ENCODE measurements at regions of chr5 and their contacts with region 1.

Region 1: DNA sequence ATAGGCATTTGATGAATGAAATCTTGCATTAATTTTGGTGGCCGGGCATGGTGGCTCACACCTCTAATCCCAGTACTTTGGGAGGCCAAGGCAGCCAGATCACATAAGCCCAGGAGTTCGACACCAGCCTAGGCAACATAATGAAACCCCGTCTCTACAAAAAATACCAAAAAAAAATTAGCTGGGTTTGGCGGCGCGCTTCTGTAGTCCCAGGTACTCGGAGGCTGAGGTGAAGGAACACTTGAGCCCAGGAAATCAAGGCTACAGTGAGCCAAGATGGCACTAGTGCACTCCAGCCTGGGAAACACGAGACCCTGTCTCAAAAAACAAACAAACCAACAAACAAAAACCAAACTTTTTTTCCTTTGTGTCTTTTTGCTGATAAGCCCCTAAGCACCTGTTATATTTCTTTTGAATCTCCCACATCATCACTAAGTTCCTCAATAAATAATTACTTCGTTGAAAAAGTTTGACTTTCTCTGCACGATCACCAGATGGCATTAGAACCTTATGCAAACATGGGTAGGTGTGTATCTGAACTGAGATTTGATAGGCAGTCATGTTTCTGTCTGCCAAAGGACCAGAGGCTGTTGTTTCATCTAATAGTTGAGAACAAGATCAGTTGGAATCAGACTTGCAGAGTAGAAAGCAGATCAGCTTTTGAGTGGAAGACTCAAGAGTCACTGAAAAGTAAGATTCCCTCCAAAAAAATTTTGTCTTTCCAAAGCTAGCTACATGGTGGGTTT is 5.5 kb upstream of the MATR3 start:
- DNase-seq: no peak
- CTCF ChIP-seq: peak; percentile 10

Region 2: GRCh38 chr5:139262059-139262741 is 25.9 kb before region 1 on chr5:
- CTCF ChIA-PET with region 1: no interaction called
- POLR2A ChIA-PET with region 1: no interaction called
- DNase-seq: no peak
- CTCF ChIP-seq: no peak

Region 3: GRCh38 chr5:139374909-139375308 is 86.8 kb after region 1 on chr5:
- CTCF ChIA-PET with region 1: no interaction called
- POLR2A ChIA-PET with region 1: interaction called, 10 read pairs
- DNase-seq: no peak
- CTCF ChIP-seq: no peak

Region 4: GRCh38 chr5:139847790-139848507 is 559.9 kb after region 1 on chr5:
- CTCF ChIA-PET with region 1: no interaction called
- POLR2A ChIA-PET with region 1: no interaction called
- DNase-seq: peak; percentile 71
- CTCF ChIP-seq: no peak

Measured in GM10248 (cell line).